Activated CD4-positive, alpha-beta T cell treated with anti-CD3 and anti-CD28 coated beads, Interleukin-2, amount 10 ng/mL, durations not matched to agents 24 days and 14 days (primary cell): ENCODE measurements at regions of chr15 and their contacts with region 1.

Region 1: GRCh38 chr15:52805351-52806283 is 15.5 kb upstream of the ONECUT1 start:
- DNase-seq: no peak
- H3K4me3 Mint-ChIP-seq: no peak overlapping the region
- H3K27ac Mint-ChIP-seq: no peak overlapping the region
- H3K4me1 Mint-ChIP-seq: peaks cover 14% of the 10 kb centered on the region
- H3K27me3 Mint-ChIP-seq: peaks cover 79% of the 10 kb centered on the region

Region 2: DNA sequence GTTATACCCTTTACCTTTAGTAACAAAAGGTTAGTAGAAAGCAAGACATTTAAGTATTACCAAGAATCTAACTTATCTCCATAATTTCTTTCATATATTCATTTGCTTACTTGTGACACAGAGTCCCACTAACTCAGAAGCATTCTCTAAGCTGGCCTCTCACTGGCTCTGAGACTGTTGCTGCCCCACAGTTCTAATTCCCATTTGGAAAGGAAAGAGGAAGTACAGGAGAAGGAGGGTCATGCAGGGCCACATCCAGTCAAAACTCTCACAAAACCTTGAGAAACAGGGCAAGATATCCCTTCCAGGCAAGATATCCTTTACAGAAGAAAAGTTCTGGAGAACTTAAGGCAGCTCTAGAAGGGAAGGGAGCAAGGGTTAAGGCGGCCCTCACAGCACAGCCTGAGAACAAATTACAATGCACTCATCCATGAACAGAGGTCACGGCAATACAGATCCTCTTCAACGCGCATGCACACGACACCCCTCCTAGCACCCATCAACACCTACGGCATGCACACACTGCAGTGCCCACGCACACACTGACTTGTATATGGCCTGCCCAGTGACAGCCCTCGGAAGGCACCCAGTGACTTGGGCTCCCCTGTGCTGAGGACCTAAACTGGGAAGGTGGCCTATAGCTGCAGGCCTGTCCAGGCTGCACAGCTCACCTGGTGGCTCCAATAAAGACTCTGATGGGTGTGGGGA is 497.0 kb before region 1 on chr15:
- intact Hi-C with region 1: no loop called
- DNase-seq: no peak
- H3K4me3 Mint-ChIP-seq: no peak overlapping the region
- H3K27ac Mint-ChIP-seq: no peak overlapping the region
- H3K4me1 Mint-ChIP-seq: peaks cover 1% of the 10 kb centered on the region
- H3K27me3 Mint-ChIP-seq: no peaks in the 10 kb centered on the region

Region 3: GRCh38 chr15:52778457-52778856 is 27.2 kb before region 1 on chr15:
- intact Hi-C with region 1: no loop called
- DNase-seq: no peak
- H3K4me3 Mint-ChIP-seq: no peak overlapping the region
- H3K27ac Mint-ChIP-seq: no peak overlapping the region
- H3K4me1 Mint-ChIP-seq: peaks cover 10% of the 10 kb centered on the region
- H3K27me3 Mint-ChIP-seq: peaks cover 63% of the 10 kb centered on the region

Region 4: GRCh38 chr15:52789601-52790161 is 15.9 kb before region 1 on chr15:
- intact Hi-C with region 1: loop called (anchors 2 kb)
- DNase-seq: peak; percentile 64
- H3K4me3 Mint-ChIP-seq: peak overlapping the region; percentile 72
- H3K27ac Mint-ChIP-seq: peak overlapping the region; percentile 45
- H3K4me1 Mint-ChIP-seq: peaks cover 7% of the 10 kb centered on the region
- H3K27me3 Mint-ChIP-seq: peaks cover 83% of the 10 kb centered on the region